ENCODE measurements at regions of chr15 and their contacts with region 1.

Region 1: GRCh38 chr15:62306851-62307504 is 141.9 kb upstream of the C2CD4B start:
- DNase-seq: peak; percentile 16
- H3K4me3 ChIP-seq: no peak overlapping the region
- CTCF ChIP-seq: peak; percentile 40

Region 2: GRCh38 chr15:61871926-61872522 is 435.0 kb before region 1 on chr15:
- CTCF ChIA-PET with region 1: interaction called, 15 read pairs
- POLR2A ChIA-PET with region 1: no interaction called
- DNase-seq: no peak
- H3K4me3 ChIP-seq: no peak overlapping the region
- CTCF ChIP-seq: peak; percentile 28

Region 3: GRCh38 chr15:62125773-62126172 is 181.2 kb before region 1 on chr15:
- CTCF ChIA-PET with region 1: interaction called, 16 read pairs
- POLR2A ChIA-PET with region 1: no interaction called
- DNase-seq: no peak
- H3K4me3 ChIP-seq: no peak overlapping the region
- CTCF ChIP-seq: peak; percentile 45

Region 4: DNA sequence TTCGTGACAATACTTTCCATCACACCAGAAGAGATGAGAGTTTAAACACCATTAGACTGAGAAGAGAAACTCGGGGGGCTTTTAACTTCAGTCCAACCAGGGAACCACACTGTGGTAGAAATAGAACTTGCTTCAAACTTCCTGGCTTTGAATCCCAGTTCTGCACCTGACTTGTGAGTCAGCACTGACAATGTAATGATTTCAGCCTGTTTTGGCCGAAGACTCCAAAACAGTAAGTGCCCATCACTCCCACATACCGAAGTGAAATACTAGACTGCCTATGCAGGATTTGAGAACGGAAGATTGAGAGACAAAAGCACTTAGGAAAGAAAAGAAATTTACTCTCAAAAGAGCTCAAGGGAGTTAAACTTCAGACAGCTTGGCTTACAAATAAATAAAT is 168.9 kb before region 1 on chr15:
- CTCF ChIA-PET with region 1: no interaction called
- POLR2A ChIA-PET with region 1: no interaction called
- DNase-seq: no peak
- H3K4me3 ChIP-seq: no peak overlapping the region
- CTCF ChIP-seq: no peak

Region 5: GRCh38 chr15:62291262-62291661 is 15.7 kb before region 1 on chr15:
- CTCF ChIA-PET with region 1: interaction called, 12 read pairs
- POLR2A ChIA-PET with region 1: no interaction called
- DNase-seq: no peak
- H3K4me3 ChIP-seq: no peak overlapping the region
- CTCF ChIP-seq: no peak

Region 6: DNA sequence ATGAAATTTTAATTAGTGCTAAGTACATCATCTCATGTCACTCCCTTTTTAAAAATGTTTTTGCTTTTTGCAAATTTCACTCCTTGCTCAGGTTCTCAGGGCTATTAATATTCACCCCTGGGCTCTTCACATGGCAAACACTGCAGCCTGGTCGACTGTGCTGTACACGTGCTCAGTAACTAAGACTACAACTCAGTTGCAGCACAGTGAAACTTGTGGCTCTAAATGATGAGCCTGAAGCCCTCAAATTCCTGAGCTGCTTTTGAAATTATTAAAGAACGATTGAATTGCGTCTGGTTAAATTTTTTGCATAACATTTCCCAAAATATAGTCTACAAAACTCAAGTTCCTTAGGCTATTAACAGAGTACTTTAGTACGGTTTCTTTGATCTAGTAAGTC is 17.4 kb after region 1 on chr15:
- CTCF ChIA-PET with region 1: interaction called, 19 read pairs
- POLR2A ChIA-PET with region 1: no interaction called
- DNase-seq: peak; percentile 26
- H3K4me3 ChIP-seq: no peak overlapping the region
- CTCF ChIP-seq: no peak